ENCODE measurements at regions of chr13 and their contacts with region 1.

Region 1: GRCh38 chr13:85828149-85828548 is 28.9 kb upstream of the SLITRK6 start:
- DNase-seq: no peak
- H3K4me3 Mint-ChIP-seq: no peak overlapping the region
- H3K27ac Mint-ChIP-seq: no peak overlapping the region
- H3K4me1 Mint-ChIP-seq: no peaks in the 10 kb centered on the region
- H3K27me3 Mint-ChIP-seq: no peaks in the 10 kb centered on the region

Region 2: DNA sequence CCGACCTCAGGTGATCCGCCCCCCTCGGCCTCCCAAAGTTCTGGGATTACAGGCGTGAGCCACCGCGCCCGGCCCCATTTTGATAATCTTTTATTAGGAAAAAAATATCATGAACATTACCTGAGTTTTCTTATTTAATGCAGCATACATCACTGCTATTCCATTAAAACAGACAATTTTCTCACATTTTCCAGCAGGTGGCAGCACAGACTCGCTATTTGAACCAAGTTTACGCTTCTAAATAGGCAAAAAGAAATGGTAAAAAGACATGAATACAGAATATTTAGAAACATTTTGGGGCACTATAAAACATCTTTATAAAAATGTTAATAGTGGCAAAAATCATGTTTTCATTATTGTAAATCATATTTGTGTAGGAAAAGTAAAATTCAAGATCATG is 932.0 kb before region 1 on chr13:
- intact Hi-C with region 1: loop called (anchors 1 kb)
- DNase-seq: peak; percentile 74
- H3K4me3 Mint-ChIP-seq: no peak overlapping the region
- H3K27ac Mint-ChIP-seq: no peak overlapping the region
- H3K4me1 Mint-ChIP-seq: no peaks in the 10 kb centered on the region
- H3K27me3 Mint-ChIP-seq: no peaks in the 10 kb centered on the region

Measured in activated CD4-positive, alpha-beta T cell treated with anti-CD3 and anti-CD28 coated beads, Interleukin-2, amount 10 ng/mL, durations not matched to agents 24 days and 14 days (primary cell).